IMR-90 (cell line): ENCODE measurements at regions of chr6 and their contacts with region 1.

Region 1: DNA sequence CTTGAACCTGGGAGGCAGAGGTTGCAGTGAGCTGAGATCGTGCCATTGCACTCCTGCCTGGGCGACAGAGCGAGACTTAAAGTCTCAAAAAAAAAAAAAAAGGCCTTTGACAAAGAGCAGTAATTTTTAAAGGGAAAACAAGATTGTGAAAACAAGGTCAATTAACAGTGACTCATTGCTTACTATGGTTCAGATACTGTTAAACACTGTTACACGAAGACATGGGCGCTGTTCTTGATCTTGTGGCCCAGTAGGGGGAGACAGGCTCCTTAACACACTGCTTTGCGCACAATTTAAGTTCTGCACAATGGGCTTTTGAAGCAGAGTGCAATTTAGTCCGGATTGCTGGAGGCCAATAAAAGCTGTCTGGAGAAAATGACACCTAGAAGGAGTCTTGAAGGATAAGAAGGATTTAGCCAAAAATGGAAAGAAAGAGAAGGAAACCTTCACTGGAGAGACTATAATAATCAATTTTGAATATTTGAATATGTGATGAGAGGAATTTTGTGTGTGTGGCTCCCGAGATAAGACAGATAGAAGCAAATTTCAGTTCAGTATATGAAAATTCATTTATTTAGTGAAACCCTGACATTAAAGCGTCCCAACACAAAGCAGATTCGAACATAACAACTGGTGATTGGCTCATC is 6.0 kb upstream of the LATS1 start:
- DNase-seq: peak; percentile 79
- ATAC-seq: peak; percentile 98
- H3K4me3 ChIP-seq: no peak overlapping the region
- H3K27ac ChIP-seq: no peak overlapping the region
- H3K4me1 ChIP-seq: no peaks in the 10 kb centered on the region
- H3K27me3 ChIP-seq: no peaks in the 10 kb centered on the region
- CTCF ChIP-seq: peak; percentile 70
- POLR2A ChIP-seq: no peak
- RAD21 ChIP-seq: peak; percentile 69

Region 2: DNA sequence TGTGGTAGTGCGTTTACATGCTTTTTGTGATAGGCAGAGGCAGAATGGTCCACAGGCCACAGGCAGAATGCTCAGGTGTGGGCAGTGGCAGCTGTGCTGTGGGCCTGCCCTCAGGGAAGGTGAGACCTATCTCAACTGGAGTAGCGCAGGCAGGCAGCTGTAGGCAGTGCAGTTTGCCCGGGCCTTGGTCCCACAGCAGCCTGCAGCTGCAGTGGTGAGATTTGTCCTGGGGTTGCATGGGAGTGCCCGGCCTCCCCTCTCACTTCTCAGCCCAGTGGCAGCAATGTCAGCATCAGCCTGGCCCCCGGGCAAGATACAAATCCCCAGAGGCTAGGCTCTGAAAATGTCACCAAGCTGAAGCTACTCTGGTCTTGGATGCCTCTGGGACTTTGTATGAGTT is 172.0 kb before region 1 on chr6:
- CTCF ChIA-PET with region 1: no interaction called
- POLR2A ChIA-PET with region 1: no interaction called
- dilution Hi-C with region 1: no loop called
- in situ Hi-C with region 1: no loop called
- intact Hi-C with region 1: no loop called
- DNase-seq: no peak
- ATAC-seq: no peak
- H3K4me3 ChIP-seq: no peak overlapping the region
- H3K27ac ChIP-seq: no peak overlapping the region
- H3K4me1 ChIP-seq: no peaks in the 10 kb centered on the region
- H3K27me3 ChIP-seq: peaks cover 8% of the 10 kb centered on the region
- CTCF ChIP-seq: no peak
- POLR2A ChIP-seq: no peak
- RAD21 ChIP-seq: no peak

Region 3: DNA sequence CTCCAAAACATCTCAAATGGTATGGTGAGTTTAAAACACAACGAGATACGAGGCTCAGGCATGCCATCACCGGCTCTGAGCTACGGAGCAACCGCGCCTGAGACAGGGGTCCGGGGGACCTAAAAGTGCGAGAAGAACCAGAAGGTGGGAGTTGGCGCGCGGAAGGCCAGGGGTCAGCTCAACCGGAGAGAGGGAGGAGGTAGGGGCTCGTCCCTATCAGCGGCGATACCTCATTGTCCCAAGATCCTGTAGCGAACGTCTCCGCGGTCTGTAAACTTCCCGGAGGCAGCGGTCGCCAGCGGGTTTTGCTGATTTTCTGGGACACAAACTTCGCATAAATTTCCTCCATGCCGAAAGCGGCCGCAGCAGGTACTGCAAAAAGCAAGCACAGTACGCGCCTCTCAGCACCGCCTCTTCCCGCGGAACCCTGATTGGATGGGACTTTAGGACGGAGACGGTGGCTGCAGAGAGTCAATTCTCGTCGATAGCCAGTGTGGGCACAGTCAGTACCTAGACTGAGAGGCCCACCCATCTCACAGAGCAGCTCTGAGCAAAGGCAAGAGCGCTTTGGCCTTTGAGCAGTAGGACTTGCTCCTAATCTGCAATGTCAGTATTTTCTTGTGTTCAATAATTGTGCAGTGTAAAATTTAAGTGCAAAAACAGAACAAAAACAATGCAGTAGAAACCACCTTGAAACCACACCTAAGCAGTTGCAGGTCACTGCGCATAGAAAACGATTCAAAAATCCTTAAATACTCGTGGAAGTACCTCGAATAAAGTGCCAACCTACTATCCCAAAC is 22.5 kb after region 1 on chr6 and contains the start of gene NUP43:
- CTCF ChIA-PET with region 1: no interaction called
- POLR2A ChIA-PET with region 1: no interaction called
- dilution Hi-C with region 1: no loop called
- in situ Hi-C with region 1: no loop called
- intact Hi-C with region 1: no loop called
- DNase-seq: peak; percentile 95
- ATAC-seq: peak; percentile 77
- H3K4me3 ChIP-seq: peak within 1 kb of the TSS; percentile 86
- H3K27ac ChIP-seq: peak within 1 kb of the TSS; percentile 70
- H3K4me1 ChIP-seq: no peaks in the 10 kb centered on the region
- H3K27me3 ChIP-seq: no peaks in the 10 kb centered on the region
- CTCF ChIP-seq: peak; percentile 41
- POLR2A ChIP-seq: no peak
- RAD21 ChIP-seq: peak; percentile 25; the same call in 1 of the 2 replicates
- total RNA-seq, gene NUP43: 35.0 and 40.5 TPM in 2 replicates

Region 4: DNA sequence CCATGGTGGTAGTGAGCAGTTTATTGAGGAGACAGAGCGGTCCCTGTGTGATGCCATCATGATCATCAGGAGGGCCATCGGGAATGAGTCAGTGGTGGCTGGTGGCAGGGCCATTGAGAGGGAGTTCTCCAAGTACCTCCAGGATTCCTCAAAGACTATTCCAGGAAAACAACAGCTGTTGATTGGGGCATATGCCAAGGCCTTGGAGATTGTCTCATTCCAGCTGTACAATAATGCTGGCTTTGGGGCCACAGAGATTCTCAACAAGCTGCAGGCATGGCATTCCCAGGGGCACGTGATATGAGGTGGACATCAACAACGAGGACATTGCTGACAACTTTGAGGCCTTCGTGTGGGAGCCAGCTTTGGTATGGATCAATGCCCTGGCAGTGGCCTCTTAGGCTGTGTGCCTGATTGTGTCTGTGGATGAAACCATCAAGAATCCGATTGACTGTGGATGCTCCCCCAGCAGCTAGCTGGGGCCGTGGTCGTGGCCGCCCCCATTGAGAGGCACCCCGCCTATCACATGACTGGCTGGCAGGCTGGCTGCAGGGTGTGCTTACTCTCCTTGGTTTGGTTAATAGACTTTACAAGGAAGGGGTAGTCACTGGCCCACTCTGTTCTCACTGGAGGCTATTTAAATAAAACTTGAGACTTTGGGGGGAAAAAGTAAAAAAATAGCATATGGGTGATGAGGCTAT is 157.3 kb after region 1 on chr6:
- CTCF ChIA-PET with region 1: no interaction called
- POLR2A ChIA-PET with region 1: no interaction called
- dilution Hi-C with region 1: no loop called
- in situ Hi-C with region 1: no loop called
- intact Hi-C with region 1: no loop called
- DNase-seq: no peak
- ATAC-seq: no peak
- H3K4me3 ChIP-seq: no peak overlapping the region
- H3K27ac ChIP-seq: no peak overlapping the region
- H3K4me1 ChIP-seq: no peaks in the 10 kb centered on the region
- H3K27me3 ChIP-seq: peaks cover 17% of the 10 kb centered on the region
- CTCF ChIP-seq: no peak
- POLR2A ChIP-seq: no peak
- RAD21 ChIP-seq: no peak

Region 5: GRCh38 chr6:150016324-150017185 is 292.7 kb after region 1 on chr6:
- CTCF ChIA-PET with region 1: no interaction called
- POLR2A ChIA-PET with region 1: no interaction called
- dilution Hi-C with region 1: no loop called
- in situ Hi-C with region 1: no loop called
- intact Hi-C with region 1: loop called (anchors 10 kb)
- DNase-seq: peak; percentile 61
- ATAC-seq: peak; percentile 88
- H3K4me3 ChIP-seq: no peak overlapping the region
- H3K27ac ChIP-seq: no peak overlapping the region
- H3K4me1 ChIP-seq: no peaks in the 10 kb centered on the region
- H3K27me3 ChIP-seq: peaks cover 51% of the 10 kb centered on the region
- CTCF ChIP-seq: peak; percentile 63
- POLR2A ChIP-seq: no peak
- RAD21 ChIP-seq: peak; percentile 67

Region 6: DNA sequence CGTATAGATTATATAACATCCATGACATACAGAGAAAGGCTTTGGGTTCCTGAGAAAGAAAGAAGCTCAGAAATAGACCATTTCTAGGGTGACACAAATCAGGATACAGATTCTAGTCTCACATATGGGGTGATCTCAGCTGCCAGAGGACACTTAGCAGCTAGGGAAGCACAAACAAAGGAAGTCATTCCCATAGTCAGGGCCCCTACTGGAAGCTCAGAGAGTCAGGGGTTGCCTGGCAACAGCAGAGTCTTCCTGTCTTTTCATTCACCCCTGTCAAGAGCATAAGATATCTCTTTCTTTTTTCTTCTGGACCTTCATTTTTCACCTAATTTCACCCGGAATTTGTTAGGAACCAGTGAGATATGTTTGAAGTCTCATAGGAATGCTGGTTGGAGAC is 563.0 kb after region 1 on chr6:
- CTCF ChIA-PET with region 1: no interaction called
- POLR2A ChIA-PET with region 1: no interaction called
- dilution Hi-C with region 1: no loop called
- in situ Hi-C with region 1: no loop called
- intact Hi-C with region 1: no loop called
- DNase-seq: peak; percentile 7
- ATAC-seq: no peak; the same call in 1 of the 2 replicates
- H3K4me3 ChIP-seq: no peak overlapping the region
- H3K27ac ChIP-seq: no peak overlapping the region
- H3K4me1 ChIP-seq: no peaks in the 10 kb centered on the region
- H3K27me3 ChIP-seq: peaks cover 5% of the 10 kb centered on the region
- CTCF ChIP-seq: no peak
- POLR2A ChIP-seq: no peak
- RAD21 ChIP-seq: no peak